Left cardiac atrium (tissue), 4 donors: ENCODE measurements at regions of chr2 and their contacts with region 1.

Region 1: DNA sequence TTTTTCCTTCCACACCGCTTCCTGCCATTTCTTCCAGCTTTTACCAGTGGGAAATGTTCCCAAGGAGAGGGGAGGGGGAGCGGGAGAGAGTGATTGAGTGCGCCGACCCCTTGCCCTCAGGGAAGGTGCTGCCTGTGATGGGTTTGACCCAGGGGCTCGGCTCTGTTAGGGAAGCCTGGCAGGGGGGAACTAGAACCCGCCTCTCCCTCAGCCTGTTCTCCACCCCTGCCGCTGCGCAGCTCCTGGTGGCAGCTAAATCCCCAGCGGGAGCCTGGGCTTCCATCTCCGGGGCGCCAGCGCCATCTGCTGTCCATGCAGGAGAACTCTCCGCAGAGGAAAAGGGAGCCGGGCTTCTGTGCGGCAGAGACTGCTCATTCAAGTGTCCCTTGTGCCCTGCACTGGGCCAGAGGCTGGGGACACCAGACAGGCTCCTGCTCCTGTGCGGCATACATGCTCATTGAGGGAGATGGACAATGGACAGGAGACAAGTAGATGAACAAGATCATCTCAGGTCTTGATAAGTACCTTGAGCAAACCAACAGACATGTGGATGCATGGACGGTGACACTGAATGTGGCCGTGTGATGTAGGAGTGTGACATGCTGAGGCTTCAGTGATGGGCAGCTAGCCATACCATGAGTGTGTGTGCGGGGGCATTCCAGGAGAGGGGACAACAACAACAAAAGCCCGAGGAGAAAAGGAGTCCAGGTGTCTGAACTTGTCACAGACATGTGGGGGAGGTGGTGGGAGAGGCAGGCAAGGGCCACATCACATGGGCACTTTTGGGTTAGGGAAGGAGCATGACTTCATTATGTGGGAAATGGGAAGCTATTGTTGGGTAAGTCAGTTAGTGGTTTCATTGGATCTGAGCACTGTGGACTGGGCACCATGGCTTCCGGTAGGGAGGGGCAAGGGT is 13.3 kb downstream of the CHPF start:
- DNase-seq: peak; percentile 84
- ATAC-seq: peak; percentile 77 to 84

Region 2: GRCh38 chr2:219057709-219058540 is 472.4 kb before region 1 on chr2:
- intact Hi-C with region 1: no loop called
- DNase-seq: peak; percentile 76
- ATAC-seq: peak; percentile 91 to 93

Region 3: DNA sequence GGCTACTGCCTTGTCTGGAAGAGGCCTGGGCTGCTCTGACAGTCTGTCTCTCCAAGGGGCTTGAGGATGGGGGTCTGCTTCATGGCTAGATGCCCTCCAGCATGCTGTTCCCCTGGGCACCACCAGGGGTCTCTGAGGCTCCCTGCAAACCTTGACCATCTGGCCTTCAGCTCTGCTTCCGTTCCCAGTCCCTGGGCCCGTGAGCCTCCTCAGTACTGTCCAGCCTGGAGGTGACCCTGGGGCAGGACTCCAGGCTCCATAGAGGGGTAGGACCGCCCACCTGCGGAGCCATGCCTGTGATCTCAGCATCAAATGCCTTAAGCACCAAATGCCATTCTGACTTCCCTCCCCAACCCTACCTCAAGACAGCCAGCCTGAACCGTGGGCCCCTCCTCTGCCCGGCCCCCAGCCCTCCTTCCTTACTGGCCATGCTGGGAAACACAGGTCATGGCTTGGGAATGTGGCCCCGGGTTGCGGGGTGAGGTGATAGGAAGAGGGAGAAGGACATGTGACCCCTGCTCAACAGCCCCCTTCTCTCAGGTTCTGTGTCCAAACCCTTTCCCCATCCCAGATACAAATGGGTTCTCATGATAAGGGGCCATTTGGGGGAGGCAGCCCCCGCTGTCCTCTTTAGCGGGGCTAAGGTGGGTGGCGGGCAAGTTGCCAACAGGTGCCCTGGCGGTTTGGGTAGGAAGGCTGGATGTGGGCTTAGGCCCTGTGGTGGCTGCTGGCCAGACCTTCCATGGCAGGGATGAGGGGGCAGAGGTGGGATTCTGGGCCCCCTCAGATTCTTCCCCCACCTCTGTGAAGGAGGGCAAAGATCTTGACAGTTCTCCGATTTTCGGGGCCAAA is 70.6 kb before region 1 on chr2:
- intact Hi-C with region 1: loop called in 1 of 2 experiments (anchors 1 kb)
- DNase-seq: peak; percentile 70
- ATAC-seq: peak; percentile 62 to 70

Region 4: DNA sequence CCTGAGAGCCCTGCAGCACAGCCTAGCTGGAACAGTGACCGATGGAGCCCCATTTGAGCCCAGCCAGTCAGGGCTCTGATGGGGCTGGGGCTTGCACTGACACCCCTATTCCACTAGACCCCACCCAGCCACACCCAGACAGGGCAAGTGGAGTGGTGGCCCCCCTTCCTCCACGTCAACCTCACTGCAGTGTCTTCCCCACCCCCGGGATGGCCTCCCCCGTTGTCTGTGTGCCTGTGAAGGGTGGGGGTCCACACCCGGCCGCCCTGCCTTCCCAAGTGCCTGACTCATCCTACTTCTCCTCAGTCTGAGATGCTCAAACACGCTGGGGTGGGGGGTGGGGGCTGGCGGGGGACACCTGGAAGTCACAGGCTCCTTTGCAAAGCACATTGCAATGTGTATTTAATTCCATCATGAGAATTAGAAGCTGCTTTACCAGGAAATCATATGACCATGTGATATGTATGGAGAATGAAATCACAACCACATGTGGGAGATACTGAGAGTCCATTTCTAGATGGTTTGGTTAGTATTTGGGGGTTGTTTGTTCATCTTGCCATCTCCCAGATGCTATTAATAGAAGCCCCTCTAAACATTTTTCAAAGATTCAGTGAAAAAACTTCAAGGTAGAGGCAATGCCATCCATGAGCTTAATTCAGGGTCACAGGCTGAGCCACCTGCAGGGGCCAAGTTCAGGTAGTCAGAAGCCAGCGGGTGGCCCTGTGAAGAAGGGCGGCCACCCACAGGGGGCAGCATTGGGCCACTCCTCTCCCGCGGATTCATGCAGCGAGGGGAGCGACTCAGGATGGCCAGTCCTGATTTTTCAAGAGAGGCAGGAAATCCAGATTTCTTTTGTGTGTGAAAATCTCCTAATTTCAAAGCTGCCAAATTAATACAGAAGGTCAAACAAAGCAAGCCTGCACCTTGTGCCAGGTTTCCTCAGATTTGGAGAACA is 54.3 kb before region 1 on chr2:
- intact Hi-C with region 1: loop called (anchors 5 kb)
- DNase-seq: peak; percentile 73
- ATAC-seq: peak; percentile 44 to 65